Breast epithelium (tissue), 4 donors: ENCODE measurements at regions of chr1 and their contacts with region 1.

Region 1: GRCh38 chr1:108049178-108049819 is 84.3 kb upstream of the VAV3 start:
- DNase-seq: no peak
- H3K4me3 ChIP-seq: no peak overlapping the region
- H3K27ac ChIP-seq: peak overlapping the region; percentile 75 to 77
- H3K4me1 ChIP-seq: peaks cover 7 to 8% of the 10 kb centered on the region in 2 donors
- H3K27me3 ChIP-seq: no peaks in the 10 kb centered on the region
- CTCF ChIP-seq: peak in 2 of 3 donors; percentile 31 to 48
- POLR2A ChIP-seq: no peak

Region 2: GRCh38 chr1:108000620-108001111 is 48.6 kb before region 1 on chr1:
- intact Hi-C with region 1: loop called (anchors 2 kb)
- DNase-seq: peak; percentile 18 to 57
- H3K4me3 ChIP-seq: no peak overlapping the region
- H3K27ac ChIP-seq: peak overlapping the region in 1 of 2 donors; percentile 20
- H3K4me1 ChIP-seq: no peaks in the 10 kb centered on the region
- H3K27me3 ChIP-seq: no peaks in the 10 kb centered on the region
- CTCF ChIP-seq: no peak
- POLR2A ChIP-seq: no peak

Region 3: DNA sequence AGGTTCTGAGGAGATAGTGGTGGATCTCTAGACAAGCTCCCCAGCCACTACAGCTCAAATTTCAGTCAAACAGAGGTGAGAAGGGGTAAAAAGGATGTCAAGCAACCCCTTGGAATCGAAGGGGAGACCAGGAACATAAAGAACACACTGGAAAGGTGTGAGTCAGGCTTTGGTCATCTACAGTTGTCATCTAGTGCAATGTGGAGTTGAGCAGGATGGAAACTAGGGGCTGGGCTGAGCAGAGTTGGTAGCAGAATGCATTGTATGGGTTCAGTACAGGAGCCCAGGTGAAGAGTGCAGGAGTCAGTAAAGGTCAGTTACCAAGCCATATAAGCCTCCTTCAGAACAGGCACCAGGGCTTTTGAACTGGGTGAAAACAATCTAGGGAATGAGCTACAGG is 31.6 kb before region 1 on chr1:
- intact Hi-C with region 1: no loop called
- DNase-seq: no peak
- H3K4me3 ChIP-seq: no peak overlapping the region
- H3K27ac ChIP-seq: no peak overlapping the region
- H3K4me1 ChIP-seq: no peaks in the 10 kb centered on the region
- H3K27me3 ChIP-seq: no peaks in the 10 kb centered on the region
- CTCF ChIP-seq: no peak
- POLR2A ChIP-seq: no peak

Region 4: DNA sequence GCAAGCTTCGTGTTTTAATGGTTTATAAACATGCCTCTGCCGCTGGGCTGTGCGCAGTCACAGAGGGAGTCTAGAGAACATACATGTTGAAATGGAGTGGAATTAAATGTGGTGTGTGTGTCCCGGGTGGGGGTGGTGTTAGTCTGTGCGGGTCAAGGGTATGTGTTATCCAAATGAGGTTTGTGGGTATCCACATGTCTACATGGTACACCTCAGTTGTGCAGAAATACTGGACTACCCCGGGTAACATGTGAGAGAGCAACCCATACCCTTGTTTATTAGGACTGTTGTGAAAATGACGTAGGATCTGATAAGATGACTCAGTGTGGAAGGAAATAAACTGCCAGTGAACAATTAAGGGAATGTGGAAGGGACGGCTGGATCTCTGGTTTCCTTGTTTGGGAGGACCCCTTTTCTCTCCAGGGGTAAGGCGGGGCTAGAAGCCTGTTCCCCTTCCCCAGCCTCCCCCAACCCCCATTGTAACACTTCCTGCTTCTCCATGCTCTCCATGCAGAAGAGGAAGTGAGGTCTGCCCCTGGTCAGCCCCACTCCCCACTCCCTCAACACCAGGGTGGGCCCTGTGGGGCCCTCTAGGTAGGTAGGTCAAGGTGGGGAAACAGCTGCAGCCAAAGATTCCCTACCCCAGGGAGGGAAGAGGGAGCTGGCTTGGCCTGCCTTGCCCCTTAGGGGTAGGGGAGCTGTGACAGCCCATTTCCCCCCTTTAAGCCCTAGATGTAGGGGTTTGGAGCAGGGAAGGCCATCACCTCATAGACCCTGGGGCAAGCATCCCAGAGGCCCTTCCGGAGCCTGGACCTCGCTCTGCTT is 1713.7 kb after region 1 on chr1:
- intact Hi-C with region 1: no loop called
- DNase-seq: no peak
- H3K4me3 ChIP-seq: no peak overlapping the region
- H3K27ac ChIP-seq: no peak overlapping the region
- H3K4me1 ChIP-seq: no peaks in the 10 kb centered on the region
- H3K27me3 ChIP-seq: no peaks in the 10 kb centered on the region
- CTCF ChIP-seq: no peak
- POLR2A ChIP-seq: no peak